AG04449 (cell line): ENCODE measurements at regions of chr18 and their contacts with region 1.

Region 1: DNA sequence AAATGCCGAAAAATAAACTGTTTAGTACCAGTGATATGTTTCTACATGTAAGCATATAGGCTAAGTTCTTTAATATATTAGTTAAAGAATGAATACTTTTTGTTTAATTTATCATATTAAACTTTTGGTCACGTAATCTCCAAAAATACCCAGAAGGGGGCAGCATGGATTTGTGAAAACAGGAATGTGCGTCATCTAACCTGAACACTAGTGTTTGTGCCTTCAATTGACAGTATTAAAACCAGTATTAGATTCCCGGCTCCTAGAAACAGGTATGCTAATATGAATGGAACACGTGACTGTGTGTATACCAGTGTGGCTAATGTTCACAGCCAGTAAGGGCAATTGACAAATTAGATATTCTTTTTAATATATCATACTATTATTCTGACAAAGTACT is 51.8 kb downstream of the WDR7 start:
- DNase-seq: no peak
- H3K4me3 ChIP-seq: no peak overlapping the region
- CTCF ChIP-seq: no peak

Region 2: GRCh38 chr18:56684277-56684676 is 18.7 kb before region 1 on chr18:
- CTCF ChIA-PET with region 1: interaction called, 37 read pairs
- POLR2A ChIA-PET with region 1: no interaction called
- DNase-seq: no peak
- H3K4me3 ChIP-seq: no peak overlapping the region
- CTCF ChIP-seq: no peak

Region 3: GRCh38 chr18:56738184-56738583 is 35.2 kb after region 1 on chr18:
- CTCF ChIA-PET with region 1: no interaction called
- POLR2A ChIA-PET with region 1: no interaction called
- DNase-seq: no peak
- H3K4me3 ChIP-seq: no peak overlapping the region
- CTCF ChIP-seq: no peak

Region 4: DNA sequence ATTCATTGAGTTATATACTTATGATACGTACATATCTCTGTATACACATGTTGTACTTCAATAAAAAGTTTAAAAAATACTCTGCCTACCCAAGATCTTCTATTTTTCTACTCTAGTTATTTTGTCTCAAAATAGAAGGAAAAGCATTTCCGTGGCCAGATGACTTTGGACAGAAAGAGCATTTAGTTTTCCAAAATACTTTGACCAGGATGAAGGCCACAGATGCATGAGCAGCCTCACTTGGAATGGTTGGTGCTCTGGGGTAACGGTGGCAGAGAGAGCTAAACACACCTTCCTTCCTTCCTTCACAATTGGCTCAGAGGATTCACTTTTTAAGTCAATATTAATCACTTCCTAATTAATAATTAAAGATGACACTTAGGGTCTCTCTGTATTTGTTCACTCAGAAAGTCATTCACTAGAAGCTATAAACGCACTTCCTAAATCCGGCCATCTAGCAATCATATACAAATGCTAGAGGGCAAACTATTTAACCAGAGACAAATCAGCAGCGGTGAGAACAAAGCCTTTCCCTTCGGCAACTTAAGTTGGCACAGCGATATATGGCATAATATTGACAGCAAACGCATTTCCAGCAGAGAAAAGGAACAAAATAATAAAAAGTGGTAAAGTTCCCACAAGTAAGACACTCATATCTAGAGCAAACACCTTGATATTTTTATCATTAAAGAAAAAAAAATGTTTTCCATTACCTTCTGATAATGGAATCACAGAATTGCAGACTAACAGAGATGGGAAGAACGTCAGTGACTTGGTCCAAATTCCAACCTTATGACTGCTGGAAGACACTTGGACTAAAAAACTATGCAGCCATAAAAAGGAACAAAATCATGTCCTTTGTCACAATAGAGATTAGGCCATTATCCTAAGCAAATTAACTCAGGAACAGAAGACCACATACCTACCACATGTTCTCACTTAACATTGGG is 974.6 kb after region 1 on chr18:
- CTCF ChIA-PET with region 1: no interaction called
- POLR2A ChIA-PET with region 1: no interaction called
- DNase-seq: no peak
- H3K4me3 ChIP-seq: no peak overlapping the region
- CTCF ChIP-seq: no peak